Common myeloid progenitor, CD34-positive (primary cell): ENCODE measurements at regions of chr5 and their contacts with region 1.

Region 1: GRCh38 chr5:96997265-96997859 is 61.5 kb downstream of the LNPEP start:
- DNase-seq: peak; percentile 69 to 83 (median 82)
- H3K4me3 ChIP-seq: no peak overlapping the region
- H3K27ac ChIP-seq: no peak overlapping the region
- H3K4me1 ChIP-seq: no peaks in the 10 kb centered on the region
- H3K27me3 ChIP-seq: no peaks in the 10 kb centered on the region

Region 2: GRCh38 chr5:97142521-97143254 is 145.3 kb after region 1 on chr5 and contains the start of gene LIX1:
- CTCF ChIA-PET with region 1: interaction called, 22 read pairs
- POLR2A ChIA-PET with region 1: no interaction called
- DNase-seq: peak; percentile 40 to 63 (median 53)
- H3K4me3 ChIP-seq: no peak within 1 kb of the TSS
- H3K27ac ChIP-seq: no peak within 1 kb of the TSS
- H3K4me1 ChIP-seq: no peaks in the 10 kb centered on the region
- H3K27me3 ChIP-seq: no peaks in the 10 kb centered on the region